ENCODE measurements at regions of chr19 and their contacts with region 1.

Region 1: DNA sequence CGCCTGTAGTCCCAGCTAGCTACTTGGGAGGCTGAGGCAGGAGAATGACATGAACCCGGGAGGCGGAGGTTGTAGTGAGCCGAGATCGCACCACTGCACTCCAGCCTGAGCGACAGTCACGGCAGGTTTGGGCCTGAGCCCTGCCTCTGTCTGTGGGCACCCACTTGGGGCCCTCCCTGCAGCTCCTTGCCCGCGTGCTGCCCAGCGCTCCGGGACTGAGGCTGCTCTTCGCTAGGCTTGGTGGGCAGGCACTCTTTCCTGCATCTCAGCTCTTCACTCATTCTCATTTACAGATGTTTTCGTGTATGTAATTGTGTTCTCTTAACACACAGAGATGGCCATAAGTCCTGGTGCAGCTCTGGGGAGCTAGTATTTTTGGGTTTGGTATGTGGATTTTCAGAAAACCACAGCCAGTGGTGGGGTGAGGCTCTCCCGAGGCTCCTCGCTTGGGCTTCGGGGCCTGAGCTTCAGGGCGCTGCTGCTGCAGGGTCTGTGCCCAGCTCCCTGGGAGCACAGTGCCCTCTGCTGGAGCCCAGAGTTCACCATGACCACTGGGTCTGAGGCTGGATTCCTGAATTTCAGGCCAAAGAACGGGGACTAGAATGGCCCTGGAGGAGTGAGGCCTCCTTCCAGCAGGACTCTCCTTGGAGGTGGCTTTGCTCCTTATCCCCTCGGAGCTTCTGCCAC is 15.2 kb downstream of the UPF1 start:
- DNase-seq: peak; percentile 62 to 68
- ATAC-seq: peak; percentile 96 to 98
- H3K4me3 ChIP-seq: no peak overlapping the region
- H3K27ac ChIP-seq: no peak overlapping the region
- H3K4me1 ChIP-seq: 0 out of 3 replicates have a peak, but pooled peaks cover 4% of the 10 kb centered on the region
- CTCF ChIP-seq: peak; percentile 74
- EP300 ChIP-seq: no peak
- POLR2A ChIP-seq: no peak
- RAD21 ChIP-seq: peak; percentile 74 to 81

Region 2: GRCh38 chr19:18588611-18589379 is 258.2 kb before region 1 on chr19 and contains the start of gene REX1BD:
- CTCF ChIA-PET with region 1: interaction called, 46 read pairs
- POLR2A ChIA-PET with region 1: interaction called, 4 read pairs
- DNase-seq: peak in 1 of 2 experiments; percentile 83
- ATAC-seq: peak; percentile 75 to 85
- H3K4me3 ChIP-seq: peak within 1 kb of the TSS; percentile 96
- H3K27ac ChIP-seq: peak within 1 kb of the TSS; percentile 100
- H3K4me1 ChIP-seq: peaks cover 9% of the 10 kb centered on the region; the same call in 1 of the 3 replicates
- CTCF ChIP-seq: peak; percentile 74
- EP300 ChIP-seq: no peak
- POLR2A ChIP-seq: peak; percentile 80
- RAD21 ChIP-seq: no peak; a peak in 1 of 5 replicates
- polyA plus RNA-seq, gene REX1BD: 13.3 and 23.1 TPM in 2 replicates

Region 3: DNA sequence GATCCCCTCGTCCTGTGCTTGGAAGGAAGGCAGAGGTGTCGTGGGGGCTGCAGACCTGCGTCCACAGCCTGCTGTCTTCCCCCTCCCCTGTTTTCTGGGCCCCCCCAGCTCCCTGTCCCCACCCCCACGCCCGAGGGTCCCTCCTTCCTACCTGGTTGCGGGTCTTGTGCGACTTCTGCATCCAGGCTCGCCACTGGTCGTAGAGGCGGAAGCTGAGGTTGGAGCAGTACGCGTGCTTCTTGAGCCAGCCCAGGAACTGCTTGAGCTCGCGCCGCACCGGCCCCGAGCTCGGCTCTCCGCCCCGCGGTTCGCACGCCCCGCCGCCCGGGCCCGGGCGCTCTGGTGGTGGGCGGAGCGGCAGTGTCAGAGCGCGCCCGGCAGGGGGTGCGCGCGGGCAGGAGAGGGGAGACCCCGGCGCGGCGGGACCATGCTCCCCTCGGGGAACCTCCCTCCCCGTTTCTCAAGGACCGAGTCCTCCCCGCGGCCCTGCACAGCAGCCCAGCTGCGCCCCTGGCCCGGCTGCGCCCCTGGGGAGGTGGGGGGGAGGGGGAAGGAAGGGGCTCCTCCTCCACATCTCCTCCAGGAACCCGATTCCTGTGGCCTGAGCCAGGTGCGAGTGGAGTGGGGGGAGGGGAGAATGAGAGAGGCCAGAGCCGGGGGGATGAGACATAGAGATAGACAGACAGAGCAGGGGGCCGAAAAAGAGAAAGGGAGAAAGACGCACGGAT is 252.7 kb before region 1 on chr19:
- CTCF ChIA-PET with region 1: interaction called, 46 read pairs
- POLR2A ChIA-PET with region 1: interaction called, 4 read pairs
- DNase-seq: peak; percentile 44 to 57
- ATAC-seq: peak; percentile 25 to 52; a peak in 5 of 6 replicates
- H3K4me3 ChIP-seq: peak overlapping the region; percentile 29; the same call in 2 of the 3 replicates
- H3K27ac ChIP-seq: peak overlapping the region; percentile 66 to 84
- H3K4me1 ChIP-seq: peaks cover 9% of the 10 kb centered on the region; the same call in 1 of the 3 replicates
- CTCF ChIP-seq: peak; percentile 70
- EP300 ChIP-seq: no peak
- POLR2A ChIP-seq: no peak
- RAD21 ChIP-seq: peak; percentile 56 to 67

Region 4: GRCh38 chr19:18831524-18832305 is 15.3 kb before region 1 on chr19 and contains the start of gene UPF1:
- CTCF ChIA-PET with region 1: interaction called, 28 read pairs
- POLR2A ChIA-PET with region 1: interaction called, 3 read pairs
- DNase-seq: peak; percentile 72 to 88
- ATAC-seq: peak; percentile 78 to 89
- H3K4me3 ChIP-seq: peak within 1 kb of the TSS; percentile 89
- H3K27ac ChIP-seq: peak within 1 kb of the TSS; percentile 94 to 100
- H3K4me1 ChIP-seq: peaks cover 9% of the 10 kb centered on the region
- CTCF ChIP-seq: no peak
- EP300 ChIP-seq: no peak
- POLR2A ChIP-seq: peak; percentile 73
- RAD21 ChIP-seq: no peak
- polyA plus RNA-seq, gene UPF1: 19.2 and 29.6 TPM in 2 replicates

Region 5: GRCh38 chr19:18865973-18866799 is 19.2 kb after region 1 on chr19:
- CTCF ChIA-PET with region 1: interaction called, 43 read pairs
- POLR2A ChIA-PET with region 1: no interaction called
- DNase-seq: peak; percentile 52 to 58
- ATAC-seq: peak; percentile 85 to 94
- H3K4me3 ChIP-seq: no peak overlapping the region
- H3K27ac ChIP-seq: no peak overlapping the region
- H3K4me1 ChIP-seq: no peaks in the 10 kb centered on the region
- CTCF ChIP-seq: peak; percentile 85
- EP300 ChIP-seq: no peak
- POLR2A ChIP-seq: no peak
- RAD21 ChIP-seq: peak; percentile 36 to 45; a peak in 3 of 5 replicates

Measured in A549 (cell line).